Head of caudate nucleus (tissue), 42 donors: ENCODE measurements at regions of chr6 and their contacts with region 1.

Region 1: GRCh38 chr6:118709859-118710350 is 58.5 kb upstream of the CEP85L start:
- DNase-seq: peak in 4 of 42 donors; percentile 3 to 40 (median 19)

Region 2: DNA sequence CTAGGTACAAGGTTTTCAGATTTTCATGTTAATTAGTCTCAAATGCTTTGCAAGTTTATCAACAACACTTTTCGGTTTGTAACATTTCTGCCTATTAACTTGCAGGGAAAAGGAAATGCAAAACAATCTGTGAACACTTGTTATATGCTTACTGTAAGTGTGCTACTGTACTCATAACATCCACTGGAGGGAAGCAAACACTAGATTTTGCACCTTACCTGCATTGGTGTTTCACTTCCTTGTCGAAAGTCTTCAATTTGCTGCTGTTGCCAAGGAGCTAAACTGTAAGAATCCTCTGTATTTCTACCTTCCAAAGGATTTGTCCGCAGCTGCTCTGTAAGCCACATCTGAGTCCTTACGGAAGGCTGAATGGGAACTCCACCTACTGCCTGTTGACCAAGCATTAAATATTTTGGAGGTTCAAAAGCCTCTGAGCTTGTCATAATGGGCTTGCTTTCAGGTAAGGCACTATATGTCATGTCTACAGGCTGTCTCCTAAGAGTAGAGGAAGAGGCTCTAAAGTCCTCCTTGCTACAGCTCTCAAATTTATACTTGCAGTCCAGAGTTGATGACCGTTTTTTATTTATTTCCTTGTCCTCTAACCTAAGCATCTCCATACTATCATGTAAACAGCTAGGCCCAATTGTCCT is 144.5 kb before region 1 on chr6:
- intact Hi-C with region 1: no loop called
- DNase-seq: peak in 4 of 42 donors; percentile 25 to 48 (median 36)

Region 3: DNA sequence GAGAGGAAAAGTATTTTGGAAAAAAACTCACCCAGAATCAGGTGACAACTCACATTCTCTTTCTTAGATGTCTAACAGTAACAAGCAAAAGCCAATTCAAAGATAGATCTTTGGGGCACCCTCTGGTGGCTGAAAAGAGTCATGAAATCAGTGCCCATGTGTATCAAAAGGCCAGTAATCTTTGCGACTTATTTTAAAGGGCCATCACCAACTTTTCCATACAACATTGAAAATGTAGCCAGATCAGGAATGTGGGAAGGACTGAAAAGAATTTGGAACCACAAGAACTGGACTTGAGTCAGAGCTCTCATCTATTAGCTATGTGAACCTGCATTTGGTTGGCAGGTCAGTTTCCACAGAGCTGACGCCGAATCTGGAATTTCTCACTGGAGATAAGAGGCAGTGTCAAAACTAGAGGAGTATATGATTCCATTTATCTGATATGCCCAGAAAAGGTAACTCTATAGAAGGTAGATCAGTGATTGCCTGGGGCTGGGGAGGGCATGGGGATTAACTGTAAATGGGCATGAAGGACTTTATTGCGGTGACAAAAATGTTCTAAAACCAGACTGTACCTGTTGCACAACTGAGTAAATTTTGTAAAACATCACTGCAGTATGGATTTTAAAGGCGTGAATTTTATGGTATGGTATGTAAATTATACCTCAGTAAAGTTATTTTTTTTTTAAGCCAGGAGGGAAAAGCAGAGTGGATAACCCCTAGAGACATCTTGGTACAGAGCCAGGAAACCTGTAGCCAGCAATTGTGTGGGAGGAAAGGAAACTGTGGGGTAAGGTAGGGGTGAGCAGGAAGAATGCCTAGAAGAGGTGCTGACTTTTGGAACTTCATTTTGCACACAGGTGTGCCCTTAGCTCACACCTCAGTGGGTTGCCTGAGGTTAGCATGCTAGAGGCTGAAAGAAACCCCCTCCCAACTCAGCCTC is 67.0 kb after region 1 on chr6:
- intact Hi-C with region 1: loop called (anchors 10 kb)
- DNase-seq: peak in 39 of 42 donors; percentile 17 to 90 (median 70)

Region 4: DNA sequence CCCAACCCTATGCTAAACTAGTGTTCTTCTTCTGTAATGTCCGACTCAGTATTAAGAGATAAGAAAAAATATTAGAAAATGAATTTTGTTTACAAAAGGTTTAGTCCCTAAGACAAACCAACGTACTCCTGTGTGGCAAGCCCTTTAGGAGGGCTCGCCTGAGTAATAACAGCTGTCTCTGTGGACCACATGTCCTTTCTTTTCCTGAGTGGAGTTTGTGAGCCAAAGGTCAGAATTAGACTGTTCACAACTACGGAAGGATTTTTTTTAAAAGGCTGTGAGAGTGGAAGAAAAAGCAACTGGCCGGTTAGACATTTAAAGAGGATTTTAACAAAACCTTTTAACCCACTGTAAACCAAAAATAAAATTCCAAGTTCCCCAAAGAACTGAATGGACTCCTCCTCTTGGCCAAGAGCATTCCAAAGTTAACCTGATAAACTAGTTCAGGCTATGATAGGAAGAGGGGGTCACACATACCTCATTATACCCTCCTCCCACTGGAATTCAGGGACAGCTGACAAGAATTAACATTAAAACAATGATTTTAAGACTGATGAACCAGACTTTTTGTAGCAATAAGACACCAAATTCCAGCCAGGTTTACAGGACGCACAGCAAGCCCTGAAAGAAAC is 325.0 kb after region 1 on chr6:
- intact Hi-C with region 1: no loop called
- DNase-seq: no peak